ENCODE measurements at regions of chr17 and their contacts with region 1.

Region 1: DNA sequence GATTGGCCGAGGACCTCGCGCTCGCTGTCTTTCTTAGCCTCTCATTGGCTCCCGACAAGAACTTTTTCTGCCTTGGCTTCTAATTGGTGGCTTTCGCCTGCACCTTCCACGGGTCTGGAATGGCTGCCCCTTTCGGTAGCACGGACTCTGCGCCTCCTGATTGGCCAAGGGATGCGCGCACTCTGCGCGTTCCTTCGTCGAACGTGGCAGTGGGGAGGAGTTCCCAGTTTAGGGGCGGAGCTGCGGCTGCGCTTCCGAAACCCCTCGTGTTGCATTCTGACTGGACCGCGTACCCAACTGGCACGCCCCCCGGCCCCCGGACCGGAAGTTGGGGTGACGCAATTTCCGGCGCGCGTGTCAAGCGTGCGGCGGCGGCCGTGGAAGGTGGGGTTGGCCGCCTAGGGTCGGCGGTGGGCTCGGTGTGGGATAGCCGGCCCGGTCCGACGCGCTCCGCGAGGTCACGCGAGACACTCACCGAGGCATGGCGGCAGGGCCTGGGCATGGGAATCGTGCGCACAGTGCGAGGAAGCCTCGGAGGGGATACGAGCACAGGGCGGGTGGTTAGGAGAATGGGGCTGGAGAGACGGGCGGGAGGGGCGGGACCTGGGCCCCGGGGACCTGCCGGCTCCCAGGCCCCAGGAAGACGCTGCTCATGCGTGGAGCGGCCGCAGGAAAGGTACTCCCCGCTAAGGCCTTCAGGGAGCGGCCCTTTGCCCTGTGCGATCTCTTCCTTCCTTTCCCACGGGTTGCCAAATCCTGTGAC is 602 bp upstream of the P4HB start:
- DNase-seq: peak; percentile 98 to 100 (median 100)
- ATAC-seq: peak; percentile 91
- H3K4me3 ChIP-seq: peak overlapping the region; percentile 83
- H3K4me3 Mint-ChIP-seq: peak overlapping the region; percentile 81 to 99 (median 90)
- H3K27ac ChIP-seq: peak overlapping the region; percentile 95
- H3K27ac Mint-ChIP-seq: peak overlapping the region; percentile 89 to 100 (median 98)
- H3K4me1 ChIP-seq: peaks cover 20 to 27% of the 10 kb centered on the region in 2 donors
- H3K4me1 Mint-ChIP-seq: peaks cover 19 to 53% (median 43%) of the 10 kb centered on the region in 7 donors
- H3K27me3 ChIP-seq: no peaks in the 10 kb centered on the region
- H3K27me3 Mint-ChIP-seq: peaks cover 0 to 5% (median 0%) of the 10 kb centered on the region in 5 donors

Region 2: GRCh38 chr17:81238817-81239600 is 621.9 kb before region 1 on chr17 and contains the starts of genes NDUFAF8 and TEPSIN:
- CTCF ChIA-PET with region 1: no interaction called
- POLR2A ChIA-PET with region 1: no interaction called
- intact Hi-C with region 1: loop called in 1 of 2 experiments (anchors 1 kb)
- DNase-seq: peak; percentile 87 to 98 (median 97)
- ATAC-seq: peak; percentile 98
- H3K4me3 ChIP-seq: peak within 1 kb of the TSS; percentile 71
- H3K4me3 Mint-ChIP-seq: peak within 1 kb of the TSS; percentile 92 to 97 (median 95)
- H3K27ac ChIP-seq: peak within 1 kb of the TSS; percentile 79
- H3K27ac Mint-ChIP-seq: peak within 1 kb of the TSS; percentile 86 to 95 (median 90)
- H3K4me1 ChIP-seq: peaks cover 22 to 24% of the 10 kb centered on the region in 2 donors
- H3K4me1 Mint-ChIP-seq: peaks cover 17 to 51% (median 38%) of the 10 kb centered on the region in 7 donors
- H3K27me3 ChIP-seq: no peaks in the 10 kb centered on the region
- H3K27me3 Mint-ChIP-seq: no peaks in the 10 kb centered on the region
- total RNA-seq, gene NDUFAF8: 34.2 to 45.6 (median 43.5) TPM
- total RNA-seq, gene TEPSIN: 52.6 to 115 (median 90.0) TPM

Region 3: GRCh38 chr17:81683584-81684237 is 177.2 kb before region 1 on chr17 and contains the starts of genes ARL16 and HGS:
- CTCF ChIA-PET with region 1: no interaction called
- POLR2A ChIA-PET with region 1: interaction called, 4 read pairs
- intact Hi-C with region 1: loop called (anchors 1 kb)
- DNase-seq: peak; percentile 91 to 98 (median 97)
- ATAC-seq: peak; percentile 98
- H3K4me3 ChIP-seq: peak within 1 kb of the TSS; percentile 76
- H3K4me3 Mint-ChIP-seq: peak within 1 kb of the TSS; percentile 88 to 99 (median 96)
- H3K27ac ChIP-seq: peak within 1 kb of the TSS; percentile 84
- H3K27ac Mint-ChIP-seq: peak within 1 kb of the TSS; percentile 83 to 97 (median 95)
- H3K4me1 ChIP-seq: peaks cover 22 to 24% of the 10 kb centered on the region in 2 donors
- H3K4me1 Mint-ChIP-seq: peaks cover 22 to 49% (median 40%) of the 10 kb centered on the region in 7 donors
- H3K27me3 ChIP-seq: no peaks in the 10 kb centered on the region
- H3K27me3 Mint-ChIP-seq: peaks cover 0 to 3% (median 0%) of the 10 kb centered on the region in 5 donors
- total RNA-seq, gene ARL16: 12.0 to 30.6 (median 30.1) TPM
- total RNA-seq, gene HGS: 108 to 174 (median 153) TPM

Region 4: DNA sequence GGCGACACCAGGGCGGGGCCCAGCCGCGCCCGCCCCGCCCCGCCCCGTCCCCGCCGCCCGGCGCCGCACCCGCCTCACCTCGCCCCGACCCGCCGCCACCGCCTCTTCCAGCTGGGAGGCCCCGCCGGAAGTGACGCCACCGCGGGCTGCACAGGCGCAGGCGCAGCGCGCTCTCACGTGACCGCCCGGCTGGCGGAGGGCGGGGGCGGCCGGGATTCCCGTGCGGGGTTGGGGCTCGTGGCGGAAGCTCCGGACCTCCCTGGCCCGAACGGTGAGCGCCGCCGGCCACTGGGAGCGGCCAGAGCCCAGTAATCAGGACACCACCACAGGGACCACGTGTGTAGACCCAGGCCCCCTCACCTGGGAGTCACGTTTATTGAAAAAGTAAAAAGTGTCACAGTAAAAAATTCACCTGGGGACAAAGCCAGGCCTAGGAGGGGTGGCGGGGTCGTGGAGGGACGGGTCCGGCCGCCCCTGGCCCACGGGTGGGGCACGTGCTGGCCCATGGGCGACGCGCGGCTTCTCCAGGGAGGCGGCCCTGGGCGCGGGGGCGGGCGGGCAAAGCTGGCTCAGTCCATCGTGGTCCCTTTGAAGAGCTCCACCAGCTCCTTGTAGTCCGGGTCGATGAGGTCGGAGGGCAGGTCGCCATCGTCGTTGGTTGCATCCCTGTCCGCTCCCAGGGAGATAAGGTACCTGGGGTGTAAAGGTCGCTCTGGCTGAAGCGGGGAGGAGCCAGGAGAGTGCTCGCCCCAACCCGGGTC is 27.6 kb before region 1 on chr17 and contains the start of gene MCRIP1:
- CTCF ChIA-PET with region 1: no interaction called
- POLR2A ChIA-PET with region 1: interaction called, 3 read pairs
- intact Hi-C with region 1: loop called (anchors 1 kb)
- DNase-seq: peak; percentile 87 to 100 (median 91)
- ATAC-seq: peak; percentile 84
- H3K4me3 ChIP-seq: peak within 1 kb of the TSS; percentile 82
- H3K4me3 Mint-ChIP-seq: peak within 1 kb of the TSS; percentile 75 to 96 (median 92)
- H3K27ac ChIP-seq: peak within 1 kb of the TSS; percentile 91
- H3K27ac Mint-ChIP-seq: peak within 1 kb of the TSS; percentile 81 to 97 (median 91)
- H3K4me1 ChIP-seq: peaks cover 13 to 16% of the 10 kb centered on the region in 2 donors
- H3K4me1 Mint-ChIP-seq: peaks cover 11 to 27% (median 19%) of the 10 kb centered on the region in 7 donors
- H3K27me3 ChIP-seq: no peaks in the 10 kb centered on the region
- H3K27me3 Mint-ChIP-seq: no peaks in the 10 kb centered on the region
- total RNA-seq, gene MCRIP1: 41.1 to 65.3 (median 53.1) TPM

Region 5: DNA sequence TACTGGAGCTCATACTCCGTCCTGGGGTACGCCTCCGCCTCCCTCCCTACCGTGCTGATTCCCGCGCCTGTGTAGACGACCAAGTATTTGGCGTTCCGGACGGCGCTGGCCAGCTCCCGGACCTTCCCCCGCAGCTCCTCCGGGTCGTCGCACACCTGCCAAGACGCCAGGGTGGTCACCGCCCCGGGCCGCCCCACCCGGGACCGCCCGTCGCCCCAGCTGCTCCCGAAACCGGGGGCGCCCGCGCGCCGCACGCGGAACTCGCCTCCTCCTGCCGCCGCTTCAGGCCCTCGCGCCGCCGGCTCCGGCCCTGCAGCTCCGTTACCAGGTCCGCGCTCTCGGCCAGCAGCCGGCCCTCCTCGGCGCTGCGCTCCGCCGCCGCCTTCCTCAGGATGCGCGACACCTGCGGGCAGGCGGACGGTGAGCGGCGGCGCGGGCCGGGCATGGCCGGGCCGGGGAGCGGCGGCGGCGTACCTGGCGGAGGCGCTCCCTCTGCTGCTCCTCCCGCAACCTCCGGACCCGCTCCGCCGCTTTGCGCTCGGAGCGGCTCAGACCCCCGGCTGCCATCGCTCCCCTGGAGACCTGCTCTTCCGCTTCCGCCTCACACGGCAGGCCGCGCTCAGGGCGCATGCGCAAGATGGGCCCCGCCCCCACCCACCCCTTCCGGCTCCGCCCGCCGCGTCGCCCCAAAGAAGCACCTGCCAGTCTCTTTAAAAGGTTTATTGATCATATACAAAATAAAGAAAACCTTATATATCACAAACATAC is 56.8 kb after region 1 on chr17 and contains the start of gene SIRT7:
- CTCF ChIA-PET with region 1: no interaction called
- POLR2A ChIA-PET with region 1: interaction called, 3 read pairs
- intact Hi-C with region 1: loop called (anchors 2 to 5 kb)
- DNase-seq: peak; percentile 69 to 83 (median 78)
- ATAC-seq: peak; percentile 93
- H3K4me3 ChIP-seq: peak within 1 kb of the TSS; percentile 49
- H3K4me3 Mint-ChIP-seq: peak within 1 kb of the TSS; percentile 81 to 92 (median 88)
- H3K27ac ChIP-seq: peak within 1 kb of the TSS; percentile 80
- H3K27ac Mint-ChIP-seq: peak within 1 kb of the TSS; percentile 82 to 90 (median 85)
- H3K4me1 ChIP-seq: peaks cover 13 to 20% of the 10 kb centered on the region in 2 donors
- H3K4me1 Mint-ChIP-seq: peaks cover 14 to 47% (median 35%) of the 10 kb centered on the region in 7 donors
- H3K27me3 ChIP-seq: no peaks in the 10 kb centered on the region
- H3K27me3 Mint-ChIP-seq: no peaks in the 10 kb centered on the region
- total RNA-seq, gene SIRT7: 56.0 to 81.4 (median 69.7) TPM

Region 6: DNA sequence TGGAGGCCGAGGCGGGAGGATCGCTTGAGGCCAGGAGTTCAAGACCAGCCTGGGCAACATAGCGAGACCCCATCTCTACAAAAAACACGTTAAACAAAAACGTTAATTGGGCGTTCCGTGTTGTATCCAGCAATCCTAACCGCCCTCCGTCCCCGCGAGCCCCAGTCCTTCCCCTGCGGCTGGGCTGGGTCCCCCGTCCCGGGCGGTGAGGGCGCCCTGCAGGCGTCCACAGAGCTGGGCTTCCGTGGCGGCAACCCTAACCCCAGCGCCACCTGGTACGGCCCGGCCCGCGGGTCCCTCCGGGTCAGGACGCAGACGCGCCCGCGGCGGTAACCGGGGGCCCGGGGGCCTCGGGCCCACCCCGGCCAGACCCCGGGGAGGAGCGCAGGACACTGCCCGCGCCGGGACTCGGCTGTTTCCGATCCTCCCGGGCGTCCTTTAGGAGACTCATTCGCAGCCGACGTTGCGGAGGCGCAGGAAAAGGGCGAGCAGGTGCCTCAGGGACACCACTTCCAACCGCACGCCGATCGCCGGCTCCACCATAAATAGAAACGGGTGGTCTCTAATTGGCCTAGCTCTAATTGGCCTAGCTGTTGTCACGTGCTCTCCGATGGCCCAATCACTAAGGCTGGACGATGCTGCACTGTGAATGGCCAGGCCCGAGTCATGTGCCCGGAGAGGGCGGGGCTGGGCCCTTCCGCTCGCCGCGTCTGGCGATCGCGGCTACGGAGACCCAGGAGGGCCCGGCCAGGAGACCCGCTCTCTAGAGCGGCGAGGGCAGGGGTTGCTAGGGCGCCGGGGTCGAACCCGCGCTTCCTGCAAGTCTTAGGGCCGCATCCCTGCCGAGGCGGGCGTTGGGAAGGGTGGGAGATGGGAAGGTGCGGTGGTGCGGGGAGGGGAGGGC is 431.6 kb after region 1 on chr17:
- CTCF ChIA-PET with region 1: no interaction called
- POLR2A ChIA-PET with region 1: no interaction called
- intact Hi-C with region 1: loop called in 1 of 2 experiments (anchors 10 kb)
- DNase-seq: peak; percentile 76 to 94 (median 91)
- ATAC-seq: peak; percentile 95
- H3K4me3 ChIP-seq: peak overlapping the region; percentile 72
- H3K4me3 Mint-ChIP-seq: peak overlapping the region; percentile 83 to 94 (median 91)
- H3K27ac ChIP-seq: peak overlapping the region; percentile 99
- H3K27ac Mint-ChIP-seq: peak overlapping the region; percentile 86 to 96 (median 92)
- H3K4me1 ChIP-seq: peaks cover 18 to 21% of the 10 kb centered on the region in 2 donors
- H3K4me1 Mint-ChIP-seq: peaks cover 14 to 54% (median 43%) of the 10 kb centered on the region in 7 donors
- H3K27me3 ChIP-seq: no peaks in the 10 kb centered on the region
- H3K27me3 Mint-ChIP-seq: no peaks in the 10 kb centered on the region

Measured in naive thymus-derived CD4-positive, alpha-beta T cell (primary cell).